ENCODE measurements at regions of chr11 and their contacts with region 1.

Region 1: DNA sequence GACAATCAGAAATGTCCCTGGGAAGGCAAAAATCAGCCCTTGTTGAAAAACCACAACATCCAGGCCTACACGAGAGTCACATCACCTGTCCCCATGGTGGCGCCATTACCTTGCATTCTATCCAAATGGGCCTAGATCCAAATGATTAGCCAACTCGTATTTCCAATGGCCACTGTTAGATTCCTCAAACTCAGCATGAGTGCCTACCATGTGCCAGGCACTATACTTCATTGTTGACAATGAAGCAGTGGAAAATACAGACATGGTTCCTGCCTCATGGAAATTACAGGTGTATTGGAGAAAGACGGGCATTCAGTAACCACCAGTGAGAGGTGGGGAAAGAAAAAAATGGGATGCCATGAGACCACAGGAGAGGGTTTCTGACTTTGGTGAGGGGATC is 29.8 kb upstream of the CREB3L1 start:
- DNase-seq: peak; percentile 37 to 81 (median 56)
- H3K4me3 ChIP-seq: no peak overlapping the region
- H3K27ac ChIP-seq: no peak overlapping the region
- H3K4me1 ChIP-seq: peaks cover 4 to 10% of the 10 kb centered on the region in 2 donors
- H3K27me3 ChIP-seq: no peaks in the 10 kb centered on the region
- CTCF ChIP-seq: peak in 5 of 6 experiments; percentile 20 to 55 (median 43)
- POLR2A ChIP-seq: no peak

Region 2: GRCh38 chr11:46183819-46184218 is 63.8 kb before region 1 on chr11:
- intact Hi-C with region 1: no loop called
- DNase-seq: no peak
- H3K4me3 ChIP-seq: no peak overlapping the region
- H3K27ac ChIP-seq: no peak overlapping the region
- H3K4me1 ChIP-seq: no peaks in the 10 kb centered on the region
- H3K27me3 ChIP-seq: no peaks in the 10 kb centered on the region
- CTCF ChIP-seq: no peak
- POLR2A ChIP-seq: no peak

Region 3: GRCh38 chr11:46308631-46309419 is 61.2 kb after region 1 on chr11:
- intact Hi-C with region 1: loop called (anchors 5 kb)
- DNase-seq: peak; percentile 72 to 93 (median 84)
- H3K4me3 ChIP-seq: no peak overlapping the region
- H3K27ac ChIP-seq: no peak overlapping the region
- H3K4me1 ChIP-seq: no peaks in the 10 kb centered on the region
- H3K27me3 ChIP-seq: no peaks in the 10 kb centered on the region
- CTCF ChIP-seq: peak; percentile 77 to 94 (median 91)
- POLR2A ChIP-seq: no peak

Measured in adrenal gland (tissue), 19 donors.